Activated CD4-positive, alpha-beta T cell treated with anti-CD3 and anti-CD28 coated beads, Interleukin-2, amount 10 ng/mL, durations not matched to agents 7 days and 5 days (primary cell): ENCODE measurements at regions of chr2 and their contacts with region 1.

Region 1: DNA sequence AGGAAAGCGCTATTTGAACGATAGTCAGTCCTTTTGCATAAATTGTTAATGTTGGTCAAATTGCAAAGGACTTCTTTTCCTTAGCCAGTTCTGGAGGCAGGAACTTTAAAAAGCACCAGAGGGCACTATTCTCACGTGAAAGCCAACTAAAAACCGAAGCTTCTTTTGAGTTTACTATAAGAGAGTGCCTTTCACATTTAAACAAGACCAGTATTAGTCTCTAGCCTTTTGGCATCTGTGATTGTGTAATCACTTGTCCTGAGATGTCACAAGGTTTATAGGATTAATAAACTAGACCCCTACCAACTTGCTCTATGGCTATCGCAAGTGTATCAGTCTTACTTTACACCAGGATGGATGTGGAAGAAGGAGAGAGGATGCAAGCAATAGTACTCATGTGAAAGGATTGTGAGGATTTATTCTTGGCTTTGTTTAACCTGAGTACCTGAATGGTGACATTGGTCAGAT is 14.4 kb upstream of the STAT4 start:
- DNase-seq: peak; percentile 56
- H3K4me3 Mint-ChIP-seq: no peak overlapping the region
- H3K27ac Mint-ChIP-seq: no peak overlapping the region
- H3K4me1 Mint-ChIP-seq: peaks cover 16% of the 10 kb centered on the region
- H3K27me3 Mint-ChIP-seq: peaks cover 10% of the 10 kb centered on the region

Region 2: DNA sequence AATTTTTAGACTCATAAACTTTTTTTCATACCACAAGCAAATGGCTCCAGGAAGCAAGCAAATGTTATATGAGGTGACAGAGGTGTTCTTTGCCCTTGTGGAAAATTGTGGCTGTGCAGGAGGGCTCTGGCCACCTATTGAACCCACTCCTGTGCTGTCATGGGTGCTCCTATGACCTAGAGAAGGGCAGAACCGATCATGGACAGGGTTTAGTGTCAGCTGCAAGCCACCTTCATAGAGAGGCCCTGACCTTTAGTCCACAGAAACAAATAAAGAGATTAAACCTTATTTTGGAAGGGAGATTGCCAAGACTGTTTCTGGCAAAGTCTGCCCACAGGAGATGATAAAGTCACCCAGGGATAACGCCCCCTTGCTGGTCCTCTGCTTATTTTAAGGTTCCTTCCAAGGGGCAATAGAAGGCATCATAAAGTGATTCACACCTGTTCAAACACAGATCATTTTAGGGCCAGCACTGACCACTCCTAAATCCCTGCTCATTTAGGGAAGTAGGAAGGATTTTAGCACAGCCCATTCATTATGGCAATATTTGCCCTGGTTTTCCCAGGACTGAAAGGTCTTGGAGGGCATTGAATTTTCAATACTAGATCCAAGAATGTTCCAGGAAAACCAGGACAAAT is 11.7 kb after region 1 on chr2:
- CTCF ChIA-PET with region 1: interaction called, 7 read pairs
- POLR2A ChIA-PET with region 1: interaction called, 10 read pairs
- DNase-seq: no peak
- H3K4me3 Mint-ChIP-seq: no peak overlapping the region
- H3K27ac Mint-ChIP-seq: no peak overlapping the region
- H3K4me1 Mint-ChIP-seq: peaks cover 34% of the 10 kb centered on the region
- H3K27me3 Mint-ChIP-seq: no peaks in the 10 kb centered on the region

Region 3: GRCh38 chr2:191521608-191522208 is 356.5 kb after region 1 on chr2:
- CTCF ChIA-PET with region 1: interaction called, 14 read pairs
- POLR2A ChIA-PET with region 1: interaction called, 3 read pairs
- DNase-seq: peak; percentile 42
- H3K4me3 Mint-ChIP-seq: no peak overlapping the region
- H3K27ac Mint-ChIP-seq: no peak overlapping the region
- H3K4me1 Mint-ChIP-seq: no peaks in the 10 kb centered on the region
- H3K27me3 Mint-ChIP-seq: peaks cover 13% of the 10 kb centered on the region